Activated CD8-positive, alpha-beta T cell treated with anti-CD3 and anti-CD28 coated beads for 36 hours (primary cell): ENCODE measurements at regions of chr4 and their contacts with region 1.

Region 1: DNA sequence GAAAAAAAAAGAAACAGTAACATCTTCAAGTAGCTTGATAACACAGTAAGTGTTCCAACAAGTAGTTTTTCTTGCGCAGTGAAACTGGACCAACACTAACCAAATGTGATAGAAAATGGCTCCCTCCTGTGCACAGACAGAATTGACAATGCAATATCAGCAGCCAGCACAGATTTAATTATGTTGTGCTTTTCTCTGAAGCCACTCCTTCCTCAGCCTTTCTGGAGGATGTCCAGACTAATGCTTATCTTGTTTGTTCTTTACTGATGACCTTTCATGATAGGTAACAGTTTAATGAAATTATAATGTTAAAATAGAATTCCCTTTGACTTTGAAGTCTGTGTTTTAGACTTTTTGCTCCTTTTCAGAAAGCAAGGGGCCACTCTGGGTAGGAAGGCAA is 147.2 kb upstream of the RPL34 start:
- DNase-seq: no peak
- ATAC-seq: no peak
- H3K4me3 Mint-ChIP-seq: no peak overlapping the region
- H3K27ac Mint-ChIP-seq: no peak overlapping the region
- H3K4me1 Mint-ChIP-seq: peaks cover 14% of the 10 kb centered on the region
- H3K27me3 Mint-ChIP-seq: no peaks in the 10 kb centered on the region
- CTCF ChIP-seq: no peak

Region 2: GRCh38 chr4:108519911-108520601 is 46.8 kb after region 1 on chr4:
- CTCF ChIA-PET with region 1: no interaction called
- POLR2A ChIA-PET with region 1: no interaction called
- intact Hi-C with region 1: loop called (anchors 5 kb)
- DNase-seq: no peak
- ATAC-seq: peak; percentile 39
- H3K4me3 Mint-ChIP-seq: no peak overlapping the region
- H3K27ac Mint-ChIP-seq: no peak overlapping the region
- H3K4me1 Mint-ChIP-seq: peaks cover 23% of the 10 kb centered on the region
- H3K27me3 Mint-ChIP-seq: no peaks in the 10 kb centered on the region
- CTCF ChIP-seq: no peak